ENCODE measurements at regions of chr6 and their contacts with region 1.

Region 1: DNA sequence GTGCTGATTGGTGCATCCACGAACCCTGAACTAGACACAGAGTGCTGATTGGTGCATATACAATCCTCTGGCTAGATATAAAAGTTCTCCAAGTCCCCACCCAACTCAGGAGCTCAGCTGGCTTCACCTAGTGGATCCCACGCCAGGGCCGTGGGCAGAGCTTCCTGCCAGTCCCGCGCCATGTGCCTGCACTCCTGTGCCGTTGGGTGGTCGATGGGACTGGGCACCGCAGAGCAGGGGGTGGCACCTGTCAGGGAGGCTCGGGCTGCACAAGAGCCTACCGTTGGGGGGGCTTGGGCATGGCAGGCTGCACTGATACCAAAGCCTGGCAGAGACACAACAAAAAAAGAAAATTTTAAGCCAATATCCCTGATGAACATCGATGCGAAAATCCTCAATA is 185.4 kb upstream of the ASCC3 start:
- DNase-seq: no peak
- ATAC-seq: no peak
- H3K4me3 ChIP-seq: no peak overlapping the region
- H3K27ac ChIP-seq: no peak overlapping the region
- H3K4me1 ChIP-seq: no peaks in the 10 kb centered on the region
- H3K27me3 ChIP-seq: no peaks in the 10 kb centered on the region
- CTCF ChIP-seq: no peak

Region 2: DNA sequence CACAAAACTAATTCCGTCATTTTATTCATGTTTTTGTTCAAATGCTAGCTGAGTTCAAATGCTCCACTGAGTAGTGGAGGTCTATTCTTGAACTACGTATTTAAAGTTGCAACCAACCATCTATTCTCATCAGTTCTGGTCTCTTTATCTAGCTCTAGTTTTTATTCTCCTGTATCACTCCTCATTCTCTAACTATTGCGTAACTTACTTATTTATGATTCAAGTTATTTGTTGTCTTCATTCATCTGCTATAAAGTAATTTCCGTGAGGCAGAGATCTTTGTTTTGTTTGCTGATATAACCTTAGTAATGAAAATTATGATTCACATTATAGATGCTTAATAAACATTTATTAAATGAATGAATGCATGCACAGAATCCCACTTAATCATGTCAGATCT is 36.2 kb after region 1 on chr6:
- CTCF ChIA-PET with region 1: no interaction called
- POLR2A ChIA-PET with region 1: interaction called, 11 read pairs
- in situ Hi-C with region 1: no loop called
- intact Hi-C with region 1: no loop called
- DNase-seq: no peak
- ATAC-seq: no peak
- H3K4me3 ChIP-seq: no peak overlapping the region
- H3K27ac ChIP-seq: no peak overlapping the region
- H3K4me1 ChIP-seq: no peaks in the 10 kb centered on the region
- H3K27me3 ChIP-seq: no peaks in the 10 kb centered on the region
- CTCF ChIP-seq: no peak

Region 3: GRCh38 chr6:101572627-101573026 is 506.1 kb after region 1 on chr6:
- CTCF ChIA-PET with region 1: no interaction called
- POLR2A ChIA-PET with region 1: no interaction called
- in situ Hi-C with region 1: no loop called
- intact Hi-C with region 1: no loop called
- DNase-seq: no peak
- ATAC-seq: no peak
- H3K4me3 ChIP-seq: no peak overlapping the region
- H3K27ac ChIP-seq: no peak overlapping the region
- H3K4me1 ChIP-seq: no peaks in the 10 kb centered on the region
- H3K27me3 ChIP-seq: no peaks in the 10 kb centered on the region
- CTCF ChIP-seq: no peak

Measured in Panc1 (cell line).